Activated naive CD4-positive, alpha-beta T cell treated with anti-CD3 and anti-CD28 coated beads for 36 hours (primary cell): ENCODE measurements at regions of chr2 and their contacts with region 1.

Region 1: DNA sequence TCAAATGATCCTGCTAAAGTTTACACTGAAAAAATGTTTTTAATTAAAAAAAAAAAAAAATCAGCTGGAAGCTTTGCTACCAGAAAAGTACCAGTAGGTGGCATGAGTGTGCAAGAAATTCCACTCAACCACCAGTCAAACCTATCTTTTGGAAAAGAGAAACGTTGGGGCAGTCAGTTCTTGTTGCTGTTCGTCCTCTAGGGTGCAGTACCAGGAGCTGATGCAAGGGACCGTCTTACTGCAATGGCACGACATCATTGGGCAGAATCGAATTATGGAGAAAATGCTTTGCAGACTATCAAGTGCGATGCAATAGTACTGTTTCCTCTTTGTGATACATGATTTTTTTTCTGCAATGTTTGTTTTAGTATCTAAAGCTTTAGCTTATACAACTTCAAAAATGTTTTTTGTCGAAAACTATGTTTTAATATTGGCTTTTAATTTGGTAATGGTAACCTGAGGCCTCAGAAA is 18.3 kb downstream of the YPEL5 start:
- DNase-seq: peak; percentile 77
- H3K4me3 Mint-ChIP-seq: no peak overlapping the region
- H3K27ac Mint-ChIP-seq: no peak overlapping the region
- H3K4me1 Mint-ChIP-seq: peaks cover 6% of the 10 kb centered on the region
- H3K27me3 Mint-ChIP-seq: no peaks in the 10 kb centered on the region

Region 2: GRCh38 chr2:29977284-29977683 is 187.8 kb before region 1 on chr2:
- CTCF ChIA-PET with region 1: no interaction called
- intact Hi-C with region 1: no loop called
- DNase-seq: no peak
- H3K4me3 Mint-ChIP-seq: no peak overlapping the region
- H3K27ac Mint-ChIP-seq: no peak overlapping the region
- H3K4me1 Mint-ChIP-seq: no peaks in the 10 kb centered on the region
- H3K27me3 Mint-ChIP-seq: no peaks in the 10 kb centered on the region

Region 3: GRCh38 chr2:30146438-30147147 is 18.5 kb before region 1 on chr2 and contains the start of gene YPEL5:
- CTCF ChIA-PET with region 1: interaction called, 37 read pairs
- intact Hi-C with region 1: no loop called
- DNase-seq: peak; percentile 99
- H3K4me3 Mint-ChIP-seq: peak within 1 kb of the TSS; percentile 84
- H3K27ac Mint-ChIP-seq: peak within 1 kb of the TSS; percentile 95
- H3K4me1 Mint-ChIP-seq: peaks cover 56% of the 10 kb centered on the region
- H3K27me3 Mint-ChIP-seq: no peaks in the 10 kb centered on the region
- total RNA-seq, gene YPEL5: 28.4 to 33.3 TPM

Region 4: DNA sequence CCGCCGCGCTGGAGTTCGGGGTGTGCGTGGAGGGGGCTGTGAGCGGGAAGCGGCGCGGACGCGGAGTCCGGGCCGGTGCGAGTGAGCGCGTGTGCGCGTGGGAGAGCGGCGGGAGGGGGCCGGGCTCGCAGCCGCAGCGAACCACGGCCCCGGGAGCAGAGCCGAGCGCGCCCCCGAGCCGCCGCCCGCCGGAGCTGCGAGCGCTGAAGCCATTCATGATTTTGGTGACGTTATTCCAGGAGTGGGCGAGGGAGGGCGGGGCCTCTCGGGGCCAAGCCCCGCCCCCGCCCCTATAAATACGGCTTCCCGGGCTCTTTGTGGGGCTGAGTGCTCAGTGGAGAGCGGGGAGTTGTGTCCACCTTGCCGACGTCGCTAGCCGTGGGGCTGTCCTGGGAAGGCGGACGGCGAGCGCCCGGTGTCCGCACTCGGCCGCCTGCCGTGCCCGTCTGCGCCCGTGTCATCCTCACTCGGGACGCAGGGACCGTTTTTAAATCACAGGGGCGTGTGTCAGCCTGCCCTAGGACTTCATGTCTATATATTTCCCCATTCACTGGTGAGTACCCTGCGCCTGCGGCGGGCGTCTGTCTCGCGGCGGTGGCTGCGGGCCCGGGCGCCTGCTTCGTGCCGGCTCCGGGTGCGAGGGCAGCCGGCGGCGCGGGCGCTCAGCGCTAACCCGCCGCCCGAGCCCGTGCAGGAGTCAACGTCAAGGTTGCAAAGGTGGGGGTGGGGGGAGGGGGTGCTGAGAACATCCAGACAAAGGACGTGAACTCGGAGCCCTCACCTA is 66.3 kb after region 1 on chr2 and contains the start of gene LBH:
- CTCF ChIA-PET with region 1: interaction called, 8 read pairs
- intact Hi-C with region 1: loop called (anchors 1 kb)
- DNase-seq: peak; percentile 90
- H3K4me3 Mint-ChIP-seq: peak within 1 kb of the TSS; percentile 83
- H3K27ac Mint-ChIP-seq: peak within 1 kb of the TSS; percentile 74
- H3K4me1 Mint-ChIP-seq: peaks cover 56% of the 10 kb centered on the region
- H3K27me3 Mint-ChIP-seq: peaks cover 3% of the 10 kb centered on the region
- total RNA-seq, gene LBH: 71.4 to 75.3 TPM

Region 5: GRCh38 chr2:30336978-30337841 is 172.1 kb after region 1 on chr2:
- CTCF ChIA-PET with region 1: interaction called, 14 read pairs
- intact Hi-C with region 1: loop called (anchors 1 kb)
- DNase-seq: peak; percentile 85
- H3K4me3 Mint-ChIP-seq: peak overlapping the region; percentile 58
- H3K27ac Mint-ChIP-seq: peak overlapping the region; percentile 92
- H3K4me1 Mint-ChIP-seq: peaks cover 77% of the 10 kb centered on the region
- H3K27me3 Mint-ChIP-seq: no peaks in the 10 kb centered on the region

Region 6: DNA sequence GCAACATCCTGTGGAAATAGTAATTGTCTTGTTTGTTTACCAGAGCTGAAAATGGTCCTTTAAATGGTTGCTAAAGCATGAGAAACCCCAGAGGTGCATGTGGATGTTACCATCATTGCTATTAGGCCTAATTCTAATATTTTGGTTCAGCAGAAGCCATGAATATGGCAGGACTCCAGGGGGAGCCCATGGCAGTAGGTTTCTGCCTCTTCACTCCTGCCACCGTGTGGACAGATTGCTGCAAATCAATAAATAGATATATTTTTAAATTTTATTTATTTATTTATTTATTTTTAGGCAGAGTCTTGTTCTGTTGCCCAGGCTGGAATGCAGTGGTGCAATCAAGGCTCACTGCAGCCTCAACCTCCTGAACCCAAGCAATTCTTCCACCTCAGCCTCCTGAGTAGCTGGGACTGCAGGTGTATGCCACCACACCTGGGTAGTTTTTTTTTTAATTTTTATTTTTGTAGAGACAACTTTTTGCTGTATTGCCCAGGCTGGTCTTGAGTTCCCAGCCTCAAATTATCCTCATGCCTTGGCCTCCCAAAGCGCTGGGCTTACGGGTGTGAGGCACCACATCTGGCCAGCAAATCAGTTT is 697.1 kb after region 1 on chr2:
- CTCF ChIA-PET with region 1: interaction called, 4 read pairs
- intact Hi-C with region 1: loop called (anchors 10 kb)
- DNase-seq: peak; percentile 71
- H3K4me3 Mint-ChIP-seq: no peak overlapping the region
- H3K27ac Mint-ChIP-seq: no peak overlapping the region
- H3K4me1 Mint-ChIP-seq: no peaks in the 10 kb centered on the region
- H3K27me3 Mint-ChIP-seq: peaks cover 7% of the 10 kb centered on the region